ENCODE measurements at regions of chr21 and their contacts with region 1.

Region 1: GRCh38 chr21:14300074-14300473 is 82.9 kb downstream of the HSPA13 start:
- DNase-seq: no peak
- ATAC-seq: no peak
- H3K4me3 ChIP-seq: no peak overlapping the region
- H3K27ac ChIP-seq: no peak overlapping the region
- H3K4me1 ChIP-seq: no peaks in the 10 kb centered on the region
- H3K27me3 ChIP-seq: no peaks in the 10 kb centered on the region
- CTCF ChIP-seq: no peak
- POLR2A ChIP-seq: no peak

Region 2: GRCh38 chr21:14273736-14274538 is 26.1 kb before region 1 on chr21:
- in situ Hi-C with region 1: no loop called
- intact Hi-C with region 1: loop called (anchors 2 kb)
- DNase-seq: peak in 1 of 2 donors; percentile 23
- ATAC-seq: peak in 1 of 2 donors; percentile 46
- H3K4me3 ChIP-seq: peak overlapping the region; percentile 20 to 49 (median 36)
- H3K27ac ChIP-seq: no peak overlapping the region
- H3K4me1 ChIP-seq: no peaks in the 10 kb centered on the region
- H3K27me3 ChIP-seq: peaks cover 0 to 3% (median 0%) of the 10 kb centered on the region in 3 donors
- CTCF ChIP-seq: no peak
- POLR2A ChIP-seq: no peak

Region 3: DNA sequence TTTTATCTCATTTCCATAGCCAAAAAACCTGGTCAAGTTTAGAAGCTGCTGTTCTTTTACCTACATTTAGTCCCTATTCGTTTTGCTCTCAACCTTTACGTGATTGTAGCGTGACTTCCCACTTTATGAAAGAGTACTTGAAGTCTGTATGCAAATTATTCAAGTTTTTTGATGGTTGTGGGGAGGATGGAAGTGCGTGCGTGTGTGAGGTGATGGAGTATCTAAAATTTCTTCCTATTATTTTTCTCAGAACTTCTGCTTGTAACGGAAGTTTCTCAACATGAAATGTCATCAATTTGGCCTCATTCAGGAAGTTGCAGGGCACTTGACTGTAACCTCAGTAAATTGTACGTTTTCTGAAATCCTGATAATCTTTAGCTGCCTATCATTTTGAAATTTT is 182.1 kb after region 1 on chr21:
- in situ Hi-C with region 1: no loop called
- intact Hi-C with region 1: no loop called
- DNase-seq: peak in 1 of 2 donors; percentile 5
- ATAC-seq: no peak
- H3K4me3 ChIP-seq: no peak overlapping the region
- H3K27ac ChIP-seq: no peak overlapping the region
- H3K4me1 ChIP-seq: no peaks in the 10 kb centered on the region
- H3K27me3 ChIP-seq: no peaks in the 10 kb centered on the region
- CTCF ChIP-seq: no peak
- POLR2A ChIP-seq: no peak